ENCODE measurements at regions of chr3 and their contacts with region 1.

Region 1: DNA sequence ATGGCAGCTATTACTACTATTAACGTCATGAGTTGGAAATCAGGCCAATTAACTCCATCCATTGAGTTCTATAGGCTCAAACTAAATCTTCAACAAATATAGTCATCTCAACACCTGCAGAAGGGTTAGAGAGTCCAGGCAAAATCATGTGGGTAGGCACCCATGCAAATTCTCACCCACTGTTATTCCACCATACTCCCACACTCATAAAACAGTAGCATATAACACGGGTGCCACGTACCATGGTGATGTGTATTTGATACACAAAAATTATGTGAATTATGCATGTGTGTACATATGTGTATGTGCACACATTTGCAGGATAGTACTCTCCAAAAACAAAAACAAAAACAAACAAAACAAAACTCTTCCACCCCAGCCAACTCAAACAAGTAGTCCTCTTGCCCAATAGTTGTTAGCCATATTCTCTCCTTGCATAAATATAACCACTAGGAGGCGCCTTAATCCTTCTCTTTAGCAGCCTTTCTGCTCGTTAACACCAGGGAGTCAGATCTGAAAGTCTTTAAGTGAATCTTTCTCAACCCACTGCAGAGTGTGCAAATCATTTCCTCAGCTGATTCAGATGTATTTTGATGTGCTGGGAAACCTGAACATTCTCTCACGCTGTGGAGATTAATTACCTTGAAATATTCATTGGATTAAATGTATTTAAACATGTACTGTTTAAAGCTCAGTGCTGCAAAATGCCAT is 38.0 kb upstream of the COPB2 start:
- DNase-seq: no peak
- ATAC-seq: peak; percentile 64 to 90 (median 82)
- H3K4me3 ChIP-seq: no peak overlapping the region
- H3K27ac ChIP-seq: no peak overlapping the region
- H3K4me1 ChIP-seq: peaks cover 0 to 5% (median 0%) of the 10 kb centered on the region in 12 donors
- H3K27me3 ChIP-seq: no peaks in the 10 kb centered on the region
- CTCF ChIP-seq: peak; percentile 71 to 88 (median 85)
- POLR2A ChIP-seq: no peak

Region 2: DNA sequence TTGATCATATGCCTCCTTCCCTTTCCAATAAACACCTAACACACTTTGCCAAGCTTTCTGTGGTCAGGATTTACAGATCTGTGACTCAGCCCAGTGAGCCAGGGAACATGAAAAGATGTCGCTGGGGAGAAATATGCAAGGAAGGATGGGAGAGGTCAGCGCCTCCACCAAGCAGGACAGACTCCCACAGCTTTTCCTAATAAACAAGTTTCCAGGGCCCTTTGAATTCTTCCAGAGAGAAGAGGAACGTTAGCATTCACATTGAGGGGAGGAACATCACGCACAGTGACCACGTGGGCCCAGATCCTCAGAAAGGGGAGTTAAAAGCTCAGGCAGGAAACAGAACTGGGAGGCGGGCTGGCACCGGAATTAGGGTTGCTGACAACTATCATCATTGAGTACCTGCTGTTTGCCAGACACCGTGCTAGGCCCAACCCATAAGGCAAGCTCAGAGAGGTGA is 116.9 kb before region 1 on chr3:
- intact Hi-C with region 1: no loop called
- DNase-seq: no peak
- ATAC-seq: no peak
- H3K4me3 ChIP-seq: no peak overlapping the region
- H3K27ac ChIP-seq: no peak overlapping the region
- H3K4me1 ChIP-seq: no peaks in the 10 kb centered on the region
- H3K27me3 ChIP-seq: peaks cover 0 to 5% (median 0%) of the 10 kb centered on the region in 9 donors
- CTCF ChIP-seq: no peak
- POLR2A ChIP-seq: no peak

Region 3: DNA sequence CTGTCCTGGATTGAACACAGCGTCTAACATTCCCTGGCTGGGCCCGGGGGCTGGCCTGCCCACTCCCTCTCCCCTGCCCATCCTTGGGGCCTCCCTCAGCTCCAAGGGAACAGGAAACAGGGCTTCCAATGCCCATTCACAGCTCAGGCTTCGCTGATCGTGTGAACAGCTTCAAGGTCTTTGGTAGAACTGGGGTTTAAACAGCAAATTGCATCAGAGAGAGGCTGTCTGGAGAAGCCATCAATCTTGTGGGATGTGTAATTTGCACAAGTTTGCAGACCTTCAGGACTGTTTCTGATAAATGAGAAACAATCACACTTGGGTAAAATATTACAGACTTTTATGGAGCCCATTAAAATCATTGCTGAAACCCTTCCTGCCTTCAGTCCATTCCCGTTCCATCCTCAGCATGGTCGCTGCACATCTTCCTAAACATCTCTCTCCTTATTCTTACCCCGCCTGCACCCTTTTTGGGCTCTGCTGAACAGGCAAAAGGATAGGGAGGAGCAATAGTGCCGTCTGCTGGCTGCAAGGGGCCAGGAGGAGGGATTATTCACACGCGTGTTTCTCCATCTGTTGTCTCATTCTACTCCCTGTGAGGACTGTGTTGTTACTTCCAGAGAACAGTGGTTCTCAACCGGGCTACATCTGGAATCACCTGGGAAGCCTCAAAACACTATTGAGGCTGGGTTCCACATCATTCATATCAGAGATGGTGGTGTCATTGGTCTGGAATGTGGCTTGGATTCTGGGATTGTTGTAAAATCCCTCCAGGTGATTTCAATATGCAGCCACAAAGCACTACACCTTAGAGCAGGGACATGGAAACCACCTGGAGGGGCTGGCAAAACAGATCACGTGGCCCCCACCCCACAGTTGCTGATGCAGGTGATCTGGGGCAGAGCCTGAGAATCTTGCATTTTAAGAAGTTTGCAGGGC is 623.9 kb after region 1 on chr3:
- intact Hi-C with region 1: loop called in 1 of 10 experiments (anchors 10 kb)
- DNase-seq: peak in 2 of 5 donors; percentile 19 to 24
- ATAC-seq: peak; percentile 34 to 68 (median 58)
- H3K4me3 ChIP-seq: no peak overlapping the region
- H3K27ac ChIP-seq: no peak overlapping the region
- H3K4me1 ChIP-seq: peaks cover 0 to 7% (median 0%) of the 10 kb centered on the region in 12 donors
- H3K27me3 ChIP-seq: no peaks in the 10 kb centered on the region
- CTCF ChIP-seq: peak; percentile 9 to 61 (median 50)
- POLR2A ChIP-seq: no peak